ENCODE measurements at regions of chr22 and their contacts with region 1.

Region 1: GRCh38 chr22:30289134-30289979 is at the start of gene CASTOR1:
- DNase-seq: peak; percentile 92
- H3K4me3 Mint-ChIP-seq: peak within 1 kb of the TSS; percentile 87
- H3K27ac Mint-ChIP-seq: peak within 1 kb of the TSS; percentile 80
- H3K4me1 Mint-ChIP-seq: peaks cover 35% of the 10 kb centered on the region
- H3K27me3 Mint-ChIP-seq: no peaks in the 10 kb centered on the region
- total RNA-seq, gene CASTOR1: 11.1 TPM in 2 replicates

Region 2: GRCh38 chr22:30243661-30244060 is 45.7 kb before region 1 on chr22:
- intact Hi-C with region 1: no loop called
- DNase-seq: no peak
- H3K4me3 Mint-ChIP-seq: peak overlapping the region; percentile 99
- H3K27ac Mint-ChIP-seq: peak overlapping the region; percentile 99
- H3K4me1 Mint-ChIP-seq: peaks cover 59% of the 10 kb centered on the region
- H3K27me3 Mint-ChIP-seq: no peaks in the 10 kb centered on the region

Region 3: DNA sequence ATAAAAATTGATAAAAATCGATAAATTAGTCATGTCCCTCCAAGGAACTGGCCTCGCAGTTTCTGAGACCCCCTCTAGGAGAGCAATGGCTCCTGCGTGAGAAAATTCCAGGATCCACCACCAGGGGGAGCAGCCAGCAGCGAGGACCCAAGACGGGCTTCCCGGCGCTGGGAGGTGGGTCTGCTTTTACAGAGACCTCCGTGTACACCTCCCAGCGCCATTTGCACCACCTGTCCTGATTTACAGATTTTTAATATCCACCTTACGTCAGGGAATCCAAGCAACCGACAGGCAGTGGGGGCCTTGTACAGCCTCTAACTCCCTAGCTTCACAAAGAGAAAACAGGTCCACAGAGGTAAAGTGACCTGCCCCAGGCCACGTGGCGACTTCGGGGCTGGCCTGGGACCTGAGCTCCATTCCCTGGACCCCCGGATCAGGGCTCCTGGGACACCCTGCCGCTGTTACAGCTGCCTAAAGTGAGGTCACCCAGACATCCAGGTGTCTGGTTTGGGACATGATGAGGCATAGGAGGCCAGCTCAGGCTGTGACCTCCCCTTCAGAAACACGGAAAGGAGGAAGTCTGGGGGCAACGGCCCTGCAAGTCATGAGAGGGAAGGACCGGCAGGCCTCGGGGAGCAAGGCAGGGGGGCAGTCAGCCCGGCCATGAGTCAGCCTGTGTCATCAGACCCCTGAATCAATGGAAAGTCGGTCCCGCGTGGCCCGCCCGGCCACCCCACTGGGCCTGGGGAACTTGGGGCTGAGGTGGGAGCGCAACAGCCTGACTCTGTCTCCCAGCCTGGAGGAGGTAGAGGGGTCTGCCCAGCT is 26.2 kb before region 1 on chr22:
- intact Hi-C with region 1: loop called (anchors 1 kb)
- DNase-seq: peak; percentile 69
- H3K4me3 Mint-ChIP-seq: peak overlapping the region; percentile 96
- H3K27ac Mint-ChIP-seq: peak overlapping the region; percentile 77
- H3K4me1 Mint-ChIP-seq: peaks cover 32% of the 10 kb centered on the region
- H3K27me3 Mint-ChIP-seq: no peaks in the 10 kb centered on the region

Region 4: DNA sequence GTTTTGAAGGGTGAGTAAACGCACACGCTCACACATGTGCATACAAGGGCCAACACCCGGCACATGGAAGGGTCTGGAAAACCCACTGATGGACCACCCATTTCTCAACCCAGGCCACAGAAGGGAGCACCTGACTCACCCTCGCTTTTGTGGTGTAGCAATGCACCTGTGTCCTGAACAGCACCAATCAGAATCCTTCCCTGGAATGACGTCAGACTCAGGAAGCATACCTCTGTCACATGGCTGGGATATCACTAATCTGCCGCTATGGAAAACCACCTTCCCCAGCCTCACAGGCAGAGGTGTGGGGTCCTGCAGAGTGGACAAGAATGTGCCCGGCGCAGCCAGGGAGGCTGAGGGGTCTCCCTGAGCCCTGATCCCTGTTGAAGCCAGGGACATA is 13.7 kb before region 1 on chr22:
- intact Hi-C with region 1: no loop called
- DNase-seq: no peak
- H3K4me3 Mint-ChIP-seq: no peak overlapping the region
- H3K27ac Mint-ChIP-seq: peak overlapping the region; percentile 54
- H3K4me1 Mint-ChIP-seq: peaks cover 61% of the 10 kb centered on the region
- H3K27me3 Mint-ChIP-seq: no peaks in the 10 kb centered on the region

Region 5: GRCh38 chr22:30326706-30327362 is 37.5 kb after region 1 on chr22 and contains the start of gene TBC1D10A:
- intact Hi-C with region 1: loop called (anchors 2 kb)
- DNase-seq: peak; percentile 91
- H3K4me3 Mint-ChIP-seq: peak within 1 kb of the TSS; percentile 76
- H3K27ac Mint-ChIP-seq: peak within 1 kb of the TSS; percentile 75
- H3K4me1 Mint-ChIP-seq: peaks cover 47% of the 10 kb centered on the region
- H3K27me3 Mint-ChIP-seq: no peaks in the 10 kb centered on the region
- total RNA-seq, gene TBC1D10A: 26.8 and 29.4 TPM in 2 replicates

Region 6: DNA sequence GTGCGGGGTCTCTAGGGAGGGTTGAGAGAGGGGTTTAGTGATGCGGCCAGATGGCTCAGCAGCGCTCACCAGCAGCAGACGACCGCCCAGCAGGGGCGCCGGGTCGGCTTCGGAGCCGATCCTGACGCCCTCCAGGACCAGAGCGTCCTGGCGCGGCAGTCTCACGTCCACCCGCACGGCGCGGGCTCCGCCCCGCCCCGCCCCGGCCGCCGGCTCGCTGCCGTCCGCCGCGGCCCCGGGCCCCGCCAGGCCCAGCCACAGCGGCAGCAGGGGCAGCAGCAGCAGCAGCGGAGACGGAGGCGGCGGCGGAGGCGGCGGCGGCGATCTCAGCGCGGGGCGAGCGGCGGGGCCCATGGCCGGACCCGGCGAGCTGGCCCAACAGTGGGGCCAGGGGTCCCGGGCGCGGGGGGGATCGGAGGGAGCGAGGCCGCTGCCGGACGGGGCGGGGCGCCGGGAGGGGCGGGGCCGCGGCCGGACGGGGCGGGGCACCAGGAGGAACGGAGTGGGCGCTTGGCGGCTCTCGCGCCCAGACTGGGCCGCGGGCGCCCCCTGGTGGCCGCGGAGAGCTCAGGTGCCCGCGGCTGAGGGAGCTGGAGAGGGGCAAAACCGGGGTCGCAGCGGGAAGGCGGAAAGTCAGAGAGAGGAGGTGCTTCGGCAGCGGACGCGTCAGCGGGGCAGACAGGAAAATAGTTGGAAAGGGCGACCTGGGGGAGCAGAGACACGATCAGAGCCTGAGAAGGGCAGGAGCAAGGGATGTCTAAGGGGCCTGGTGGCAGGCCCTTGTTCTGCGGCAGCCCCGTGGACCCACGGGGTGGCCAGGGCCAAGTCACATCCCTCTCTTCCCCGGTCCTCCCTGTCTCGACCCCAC is 97.8 kb after region 1 on chr22 and contains the start of gene RNF215:
- intact Hi-C with region 1: loop called (anchors 1 kb)
- DNase-seq: peak; percentile 76
- H3K4me3 Mint-ChIP-seq: peak within 1 kb of the TSS; percentile 84
- H3K27ac Mint-ChIP-seq: peak within 1 kb of the TSS; percentile 69
- H3K4me1 Mint-ChIP-seq: peaks cover 23% of the 10 kb centered on the region
- H3K27me3 Mint-ChIP-seq: no peaks in the 10 kb centered on the region
- total RNA-seq, gene RNF215: 17.2 and 19.3 TPM in 2 replicates